ENCODE measurements at regions of chr14 and their contacts with region 1.

Region 1: DNA sequence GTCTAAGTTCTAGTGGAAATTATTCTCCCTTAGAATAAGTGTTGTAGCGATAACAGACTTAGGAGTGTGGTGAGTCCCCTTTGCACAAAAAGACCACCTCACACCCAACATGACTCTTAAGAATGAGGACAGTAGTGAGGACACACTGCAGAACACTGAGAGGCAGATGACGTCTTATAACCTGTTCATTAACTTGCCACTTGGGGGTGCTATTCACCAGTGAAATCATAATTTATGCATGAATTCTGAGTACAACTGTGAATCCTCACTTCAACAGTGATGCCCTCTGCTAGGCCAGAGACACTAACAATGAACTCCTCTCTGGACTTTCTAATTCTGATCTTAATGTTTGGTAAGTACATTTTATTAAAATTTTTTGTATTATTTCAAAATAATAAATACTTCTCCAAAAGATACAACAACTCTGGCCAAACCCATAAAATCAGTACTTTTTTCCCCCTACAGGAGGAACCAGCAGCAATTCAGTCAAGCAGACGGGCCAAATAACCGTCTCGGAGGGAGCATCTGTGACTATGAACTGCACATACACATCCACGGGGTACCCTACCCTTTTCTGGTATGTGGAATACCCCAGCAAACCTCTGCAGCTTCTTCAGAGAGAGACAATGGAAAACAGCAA is 274.7 kb downstream of the DAD1 start:
- DNase-seq: peak; percentile 14
- H3K4me3 ChIP-seq: no peak overlapping the region
- H3K27ac ChIP-seq: no peak overlapping the region
- H3K4me1 ChIP-seq: no peaks in the 10 kb centered on the region
- H3K27me3 ChIP-seq: no peaks in the 10 kb centered on the region
- CTCF ChIP-seq: peak; percentile 12 to 70 (median 61)
- POLR2A ChIP-seq: no peak

Region 2: GRCh38 chr14:22131749-22132476 is 182.4 kb before region 1 on chr14:
- intact Hi-C with region 1: no loop called
- DNase-seq: no peak
- H3K4me3 ChIP-seq: no peak overlapping the region
- H3K27ac ChIP-seq: no peak overlapping the region
- H3K4me1 ChIP-seq: no peaks in the 10 kb centered on the region
- H3K27me3 ChIP-seq: no peaks in the 10 kb centered on the region
- CTCF ChIP-seq: peak in 1 of 4 experiments; percentile 17
- POLR2A ChIP-seq: no peak

Region 3: GRCh38 chr14:22265319-22266137 is 48.8 kb before region 1 on chr14:
- intact Hi-C with region 1: loop called (anchors 10 kb)
- DNase-seq: no peak
- H3K4me3 ChIP-seq: no peak overlapping the region
- H3K27ac ChIP-seq: no peak overlapping the region
- H3K4me1 ChIP-seq: no peaks in the 10 kb centered on the region
- H3K27me3 ChIP-seq: no peaks in the 10 kb centered on the region
- CTCF ChIP-seq: no peak
- POLR2A ChIP-seq: no peak

Region 4: GRCh38 chr14:22791301-22791700 is 477.0 kb after region 1 on chr14:
- intact Hi-C with region 1: no loop called
- DNase-seq: no peak
- H3K4me3 ChIP-seq: no peak overlapping the region
- H3K27ac ChIP-seq: no peak overlapping the region
- H3K4me1 ChIP-seq: no peaks in the 10 kb centered on the region
- H3K27me3 ChIP-seq: no peaks in the 10 kb centered on the region
- CTCF ChIP-seq: no peak
- POLR2A ChIP-seq: no peak

Measured in prostate gland (tissue), 2 donors.